K562 (cell line): ENCODE measurements at regions of chr6 and their contacts with region 1.

Region 1: GRCh38 chr6:27472617-27473400 is at the start of gene ZNF184:
- DNase-seq: peak; percentile 97 to 100 (median 98)
- ATAC-seq: peak; percentile 91
- H3K4me3 ChIP-seq: peak within 1 kb of the TSS; percentile 75
- H3K27ac ChIP-seq: peak within 1 kb of the TSS; percentile 91
- H3K4me1 ChIP-seq: peaks cover 8 to 11% of the 10 kb centered on the region in 2 experiments; a peak in 4 of 5 replicates
- H3K27me3 ChIP-seq: no peaks in the 10 kb centered on the region
- CTCF ChIP-seq: peak; percentile 31 to 42 (median 37); a peak in 5 of 6 replicates
- EP300 ChIP-seq: peak; percentile 92
- POLR2A ChIP-seq: peak; percentile 92
- RAD21 ChIP-seq: peak; percentile 10 to 18; a peak in 2 of 4 replicates
- polyA plus RNA-seq, gene ZNF184: 7.6 to 12.8 TPM

Region 2: DNA sequence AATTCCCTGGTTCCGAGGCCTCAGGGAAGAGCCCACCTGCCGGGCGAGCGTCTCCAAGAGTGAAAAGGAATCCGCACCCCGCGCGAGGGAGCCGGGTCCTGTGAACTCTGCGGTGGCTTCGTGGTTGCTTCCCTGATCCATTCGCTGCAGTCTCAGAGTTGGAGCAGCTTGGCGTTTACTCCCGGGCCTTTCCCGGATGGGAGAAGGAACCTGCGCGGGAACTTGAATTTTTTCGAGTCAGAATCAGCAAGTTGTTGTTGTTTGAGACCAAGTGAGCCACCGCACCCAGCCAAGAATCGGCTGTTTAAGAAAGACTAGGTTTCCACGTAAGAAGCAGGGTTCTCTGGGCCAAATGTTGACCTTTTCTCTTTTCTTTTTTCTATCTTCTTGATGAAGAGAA is 212.4 kb before region 1 on chr6:
- CTCF ChIA-PET with region 1: no interaction called
- POLR2A ChIA-PET with region 1: no interaction called
- in situ Hi-C with region 1: no loop called
- intact Hi-C with region 1: no loop called
- DNase-seq: no peak
- ATAC-seq: no peak
- H3K4me3 ChIP-seq: no peak overlapping the region
- H3K27ac ChIP-seq: no peak overlapping the region
- H3K4me1 ChIP-seq: peaks cover 0 to 7% of the 10 kb centered on the region in 2 experiments; a peak in 1 of 5 replicates
- H3K27me3 ChIP-seq: no peaks in the 10 kb centered on the region
- CTCF ChIP-seq: no peak
- EP300 ChIP-seq: no peak
- POLR2A ChIP-seq: no peak
- RAD21 ChIP-seq: no peak

Region 3: GRCh38 chr6:27332692-27333641 is 139.8 kb before region 1 on chr6:
- CTCF ChIA-PET with region 1: no interaction called
- POLR2A ChIA-PET with region 1: interaction called, 6 read pairs
- in situ Hi-C with region 1: no loop called
- intact Hi-C with region 1: loop called (anchors 1 kb)
- DNase-seq: peak; percentile 67 to 91 (median 78)
- ATAC-seq: peak; percentile 92
- H3K4me3 ChIP-seq: peak overlapping the region; percentile 64
- H3K27ac ChIP-seq: peak overlapping the region; percentile 82
- H3K4me1 ChIP-seq: peaks cover 0 to 5% of the 10 kb centered on the region in 2 experiments; a peak in 2 of 5 replicates
- H3K27me3 ChIP-seq: no peaks in the 10 kb centered on the region
- CTCF ChIP-seq: peak in 1 of 3 experiments; percentile 18; a peak in 1 of 6 replicates
- EP300 ChIP-seq: peak; percentile 71
- POLR2A ChIP-seq: no peak
- RAD21 ChIP-seq: no peak; a peak in 2 of 4 replicates

Region 4: GRCh38 chr6:27388293-27389197 is 84.3 kb before region 1 on chr6 and contains the start of gene ZNF391:
- CTCF ChIA-PET with region 1: no interaction called
- POLR2A ChIA-PET with region 1: no interaction called
- in situ Hi-C with region 1: no loop called
- intact Hi-C with region 1: loop called (anchors 2 kb)
- DNase-seq: peak; percentile 63 to 91 (median 78)
- ATAC-seq: peak; percentile 96
- H3K4me3 ChIP-seq: peak within 1 kb of the TSS; percentile 63
- H3K27ac ChIP-seq: peak within 1 kb of the TSS; percentile 86
- H3K4me1 ChIP-seq: peaks cover 4 to 9% of the 10 kb centered on the region in 2 experiments; a peak in 4 of 5 replicates
- H3K27me3 ChIP-seq: no peaks in the 10 kb centered on the region
- CTCF ChIP-seq: peak in 1 of 3 experiments; percentile 6; a peak in 1 of 6 replicates
- EP300 ChIP-seq: peak; percentile 63
- POLR2A ChIP-seq: peak; percentile 97
- RAD21 ChIP-seq: peak; percentile 39 to 41
- polyA plus RNA-seq, gene ZNF391: 2.3 to 2.5 TPM